HCT116 (cell line): ENCODE measurements at regions of chrX and their contacts with region 1.

Region 1: GRCh38 chrX:103533511-103534216 is 14.4 kb upstream of the RAB40A start:
- DNase-seq: peak; percentile 37
- ATAC-seq: peak; percentile 82
- H3K4me3 ChIP-seq: no peak overlapping the region
- H3K27ac ChIP-seq: no peak overlapping the region
- H3K4me1 ChIP-seq: peaks cover 0 to 3% of the 10 kb centered on the region in 2 experiments; a peak in 1 of 4 replicates
- H3K27me3 ChIP-seq: no peaks in the 10 kb centered on the region
- CTCF ChIP-seq: peak; percentile 60 to 71 (median 67); a peak in 5 of 6 replicates
- POLR2A ChIP-seq: no peak
- RAD21 ChIP-seq: peak; percentile 78

Region 2: DNA sequence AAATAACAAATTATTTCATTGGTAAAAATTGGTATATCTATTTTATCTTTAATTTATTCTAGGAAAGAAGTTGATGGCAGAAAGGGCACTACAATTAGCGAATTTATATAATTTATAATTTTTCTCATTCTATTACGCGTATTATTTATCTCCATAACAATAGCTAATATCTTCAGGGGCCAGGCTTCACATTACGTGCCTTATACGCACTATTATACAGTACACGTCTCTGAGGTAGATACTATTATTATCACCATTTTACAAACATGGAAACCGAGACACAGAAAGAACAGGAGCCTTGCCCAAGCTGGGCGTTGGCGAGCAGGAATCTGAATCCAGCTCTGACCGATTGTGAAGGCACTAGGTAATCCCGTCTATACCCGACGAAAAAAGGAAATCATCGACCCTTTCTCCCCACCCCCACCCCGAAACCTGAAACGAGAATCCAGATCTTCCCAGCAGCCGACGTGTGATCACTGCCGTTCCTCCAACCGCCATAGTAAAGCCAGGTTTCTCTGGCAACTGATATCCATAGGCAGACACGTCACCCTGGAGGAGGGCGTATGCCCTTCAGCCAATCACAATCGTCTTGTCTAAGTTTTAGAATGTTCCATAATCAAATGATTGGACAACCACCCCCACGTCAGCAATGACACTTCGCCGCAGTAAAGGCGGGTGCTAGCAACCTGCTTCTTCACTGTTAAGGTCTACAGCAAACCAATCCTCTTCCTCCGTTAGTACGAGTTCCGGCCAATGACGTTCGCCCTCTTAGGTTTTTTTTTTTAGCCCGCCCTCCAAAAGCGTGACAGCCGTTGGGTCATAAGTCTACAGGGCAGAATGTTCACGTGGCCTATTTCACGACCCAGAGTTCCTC is 152.8 kb after region 1 on chrX and contains the start of gene MORF4L2:
- CTCF ChIA-PET with region 1: no interaction called
- POLR2A ChIA-PET with region 1: no interaction called
- RAD21 ChIA-PET with region 1: no interaction called
- intact Hi-C with region 1: loop called (anchors 5 kb)
- DNase-seq: peak; percentile 95
- ATAC-seq: peak; percentile 87
- H3K4me3 ChIP-seq: peak within 1 kb of the TSS; percentile 77 to 80
- H3K27ac ChIP-seq: peak within 1 kb of the TSS; percentile 94
- H3K4me1 ChIP-seq: peaks cover 2 to 17% of the 10 kb centered on the region in 2 experiments; a peak in 3 of 4 replicates
- H3K27me3 ChIP-seq: no peaks in the 10 kb centered on the region
- CTCF ChIP-seq: no peak
- POLR2A ChIP-seq: peak; percentile 65
- RAD21 ChIP-seq: no peak
- total RNA-seq, gene MORF4L2: 308 TPM

Region 3: DNA sequence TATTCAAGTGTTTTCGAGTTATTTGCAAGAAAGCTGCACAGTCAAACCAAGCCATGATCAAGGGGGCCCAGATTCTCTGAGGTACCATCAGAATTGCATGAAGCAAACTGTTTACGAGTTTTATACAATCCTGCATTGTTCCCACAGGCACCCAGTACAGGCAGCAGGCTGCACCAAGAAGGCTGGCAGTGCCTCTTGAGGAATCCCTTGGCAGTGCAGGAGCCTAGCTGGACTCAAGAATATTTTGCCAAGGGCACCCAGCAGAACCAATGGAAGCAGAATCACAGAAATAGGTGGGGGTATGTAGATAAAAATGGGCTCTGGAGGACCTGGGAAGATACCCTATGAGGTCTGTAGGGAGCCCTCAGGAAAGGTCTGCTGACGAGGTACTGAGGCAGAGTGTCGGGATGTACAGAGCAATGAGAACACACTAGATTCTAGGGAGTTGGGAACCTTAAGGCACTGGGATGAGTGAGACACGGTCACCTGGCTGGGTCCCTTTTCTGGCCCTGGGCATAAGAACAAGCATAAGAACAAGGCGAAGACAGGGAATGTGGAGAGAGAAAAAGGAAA is 240.5 kb after region 1 on chrX:
- CTCF ChIA-PET with region 1: interaction called, 5 read pairs
- POLR2A ChIA-PET with region 1: interaction called, 3 read pairs
- RAD21 ChIA-PET with region 1: no interaction called
- intact Hi-C with region 1: loop called (anchors 5 kb)
- DNase-seq: peak; percentile 8
- ATAC-seq: peak; percentile 86
- H3K4me3 ChIP-seq: no peak overlapping the region
- H3K27ac ChIP-seq: no peak overlapping the region
- H3K4me1 ChIP-seq: no peaks in the 10 kb centered on the region
- H3K27me3 ChIP-seq: peaks cover 18% of the 10 kb centered on the region; the same call in 1 of the 2 replicates
- CTCF ChIP-seq: peak; percentile 42 to 52 (median 48); a peak in 4 of 6 replicates
- POLR2A ChIP-seq: no peak
- RAD21 ChIP-seq: peak; percentile 59

Region 4: DNA sequence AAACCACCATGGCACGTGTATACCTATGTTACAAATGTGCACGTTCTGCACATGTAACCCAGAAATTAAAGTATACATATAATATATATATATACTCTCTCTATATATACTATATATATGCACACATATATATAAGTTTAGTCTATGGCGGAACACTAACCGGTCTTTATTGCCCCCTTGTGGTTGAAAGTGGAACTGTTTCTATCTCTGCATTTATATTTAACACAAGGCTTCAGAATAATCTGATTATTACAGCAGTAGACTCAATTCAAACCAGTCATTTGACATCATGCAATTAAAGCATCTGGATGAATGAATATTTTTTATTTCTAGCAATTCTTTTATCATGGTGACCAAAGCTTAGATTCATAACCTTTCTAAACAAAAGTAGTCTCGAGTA is 283.8 kb after region 1 on chrX:
- CTCF ChIA-PET with region 1: interaction called, 6 read pairs
- POLR2A ChIA-PET with region 1: no interaction called
- RAD21 ChIA-PET with region 1: no interaction called
- intact Hi-C with region 1: loop called (anchors 1 kb)
- DNase-seq: peak; percentile 15
- ATAC-seq: peak; percentile 59
- H3K4me3 ChIP-seq: no peak overlapping the region
- H3K27ac ChIP-seq: no peak overlapping the region
- H3K4me1 ChIP-seq: no peaks in the 10 kb centered on the region
- H3K27me3 ChIP-seq: no peaks in the 10 kb centered on the region
- CTCF ChIP-seq: peak; percentile 40 to 44 (median 42); a peak in 4 of 6 replicates
- POLR2A ChIP-seq: no peak
- RAD21 ChIP-seq: peak; percentile 51

Region 5: DNA sequence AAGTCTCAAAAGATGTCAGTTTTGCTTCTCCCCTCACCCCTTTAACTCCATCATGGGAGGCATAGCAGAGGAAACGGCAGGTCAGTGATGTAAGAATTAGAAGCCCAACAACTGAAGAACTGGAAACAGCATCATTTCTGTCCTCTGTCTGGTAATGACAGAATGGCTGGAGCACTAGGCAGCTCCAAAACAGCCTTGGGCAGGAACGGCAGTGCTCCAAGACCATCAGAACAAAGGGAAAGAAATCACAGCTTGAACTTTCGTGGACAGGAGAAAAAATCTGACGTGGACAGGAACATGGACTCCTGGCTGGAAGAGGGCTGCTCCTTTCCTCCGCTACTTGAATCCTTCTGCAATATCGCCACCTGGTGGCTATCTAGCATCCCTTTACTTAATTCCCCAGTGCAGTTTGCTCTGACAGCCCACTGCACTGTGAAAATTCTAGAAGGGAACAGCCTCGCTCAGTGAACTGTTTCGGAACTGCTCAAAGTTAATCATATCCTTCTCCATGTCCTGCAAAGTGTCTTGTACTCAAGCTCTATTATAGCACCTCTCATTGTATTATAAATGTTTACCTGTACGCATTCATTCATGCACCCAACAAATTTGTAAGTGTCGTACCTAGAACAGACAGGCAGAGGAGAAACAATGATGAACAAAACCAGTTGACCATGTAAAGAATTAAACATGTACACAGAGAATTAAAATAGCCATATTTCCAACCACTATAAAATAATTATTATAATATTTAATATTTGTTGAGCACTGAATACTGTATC is 602.8 kb after region 1 on chrX:
- CTCF ChIA-PET with region 1: no interaction called
- POLR2A ChIA-PET with region 1: no interaction called
- RAD21 ChIA-PET with region 1: no interaction called
- intact Hi-C with region 1: loop called (anchors 10 kb)
- DNase-seq: peak; percentile 63
- ATAC-seq: peak; percentile 95
- H3K4me3 ChIP-seq: peak overlapping the region; percentile 19 to 34; a peak in 3 of 4 replicates
- H3K27ac ChIP-seq: no peak overlapping the region
- H3K4me1 ChIP-seq: 0 out of 4 replicates have a peak, but pooled peaks cover 0 to 2% of the 10 kb centered on the region in 2 experiments
- H3K27me3 ChIP-seq: no peaks in the 10 kb centered on the region
- CTCF ChIP-seq: peak; percentile 49 to 56 (median 54); a peak in 5 of 6 replicates
- POLR2A ChIP-seq: no peak
- RAD21 ChIP-seq: peak; percentile 69